ENCODE measurements at regions of chr12 and their contacts with region 1.

Region 1: DNA sequence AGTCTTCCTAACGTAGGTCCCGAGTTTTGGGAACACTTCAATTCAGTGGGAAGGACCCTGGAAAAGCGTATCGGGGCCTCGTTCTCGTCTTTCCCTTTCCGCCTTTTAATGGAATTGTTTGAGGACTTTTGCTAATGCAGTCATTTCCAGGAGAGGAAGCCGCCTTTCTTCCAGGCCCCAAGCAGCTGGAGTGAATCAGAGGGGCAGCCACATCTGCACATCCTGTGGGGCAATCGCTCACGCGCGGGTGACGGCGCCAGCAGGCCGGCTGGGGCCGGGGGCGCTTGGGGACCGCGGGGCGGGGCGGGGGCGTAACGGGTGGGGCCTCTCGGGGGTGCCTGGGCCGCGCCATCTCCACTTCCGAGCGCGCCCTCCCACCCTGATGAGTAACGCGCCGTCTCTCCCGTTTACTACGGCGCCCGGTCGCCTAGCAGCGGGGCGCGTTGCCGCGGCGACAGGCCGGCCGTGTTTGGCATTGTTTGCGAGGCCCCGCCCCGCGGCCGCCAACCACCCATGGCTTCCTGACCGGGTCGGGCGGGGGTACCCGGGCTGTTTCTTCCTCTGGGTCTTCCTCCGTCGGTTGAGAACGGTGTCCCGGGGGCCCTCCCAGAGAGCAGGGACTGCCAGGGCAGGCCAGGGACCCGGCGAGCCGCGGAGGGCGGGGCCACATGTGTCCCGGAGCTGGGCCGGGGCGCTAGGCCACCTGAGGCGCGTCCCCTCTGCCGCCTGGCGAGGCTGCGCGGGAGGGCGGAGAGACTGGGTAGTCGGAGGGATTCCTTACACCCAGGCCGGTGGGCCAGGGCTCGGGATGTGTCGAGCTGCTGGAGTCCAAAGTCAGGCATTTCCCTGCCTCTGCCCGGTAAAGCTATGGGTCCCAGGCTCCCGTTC is 2.3 kb downstream of the GSG1 start:
- DNase-seq: peak; percentile 93
- H3K4me3 Mint-ChIP-seq: peak overlapping the region; percentile 61
- H3K27ac Mint-ChIP-seq: peak overlapping the region; percentile 83
- H3K4me1 Mint-ChIP-seq: peaks cover 57% of the 10 kb centered on the region
- H3K27me3 Mint-ChIP-seq: no peaks in the 10 kb centered on the region

Region 2: GRCh38 chr12:12724661-12725545 is 376.2 kb before region 1 on chr12:
- CTCF ChIA-PET with region 1: no interaction called
- POLR2A ChIA-PET with region 1: interaction called, 3 read pairs
- intact Hi-C with region 1: loop called (anchors 2 kb)
- DNase-seq: peak; percentile 95
- H3K4me3 Mint-ChIP-seq: peak overlapping the region; percentile 95
- H3K27ac Mint-ChIP-seq: peak overlapping the region; percentile 97
- H3K4me1 Mint-ChIP-seq: peaks cover 50% of the 10 kb centered on the region
- H3K27me3 Mint-ChIP-seq: peaks cover 2% of the 10 kb centered on the region

Region 3: DNA sequence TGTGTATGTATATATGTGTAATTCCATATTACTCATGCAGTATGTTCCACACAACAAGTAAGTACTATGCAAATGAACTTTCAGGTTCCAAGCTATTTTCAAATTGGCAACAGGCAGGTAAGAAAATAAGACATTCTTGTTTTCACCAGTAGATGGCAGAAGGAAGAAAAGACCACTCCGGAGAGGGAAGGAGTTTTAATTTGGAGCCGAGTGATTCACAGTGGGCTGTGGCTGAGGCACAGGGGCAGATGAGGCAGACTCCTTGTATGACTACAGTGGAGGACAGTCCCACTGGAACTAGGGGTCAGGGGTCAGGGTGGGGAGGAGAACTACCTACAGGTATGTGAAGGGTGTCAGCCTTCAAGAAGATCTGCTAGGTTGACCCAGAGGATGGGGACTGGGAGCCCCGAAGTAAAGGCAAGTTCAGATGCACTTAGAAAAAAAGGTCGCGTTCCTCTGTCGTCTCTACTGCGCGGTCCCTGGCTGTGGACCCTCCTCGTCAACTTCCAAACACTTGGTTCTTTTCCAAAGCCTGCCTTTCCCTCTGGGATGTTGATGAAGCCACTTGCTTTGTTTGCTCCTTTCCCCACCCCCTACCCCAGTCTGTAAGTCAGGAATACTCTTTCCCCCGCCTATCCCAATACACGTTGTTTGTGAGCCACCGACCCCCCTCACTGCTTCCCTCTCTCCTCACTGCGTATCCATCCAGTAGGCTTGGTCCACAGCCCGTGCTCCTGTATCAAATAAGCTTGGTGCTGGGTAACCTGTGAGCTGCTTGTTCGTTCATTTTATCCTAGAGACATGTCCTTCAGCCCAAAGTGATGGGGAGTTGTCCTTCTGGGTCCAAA is 263.9 kb before region 1 on chr12:
- CTCF ChIA-PET with region 1: interaction called, 4 read pairs
- POLR2A ChIA-PET with region 1: no interaction called
- intact Hi-C with region 1: loop called (anchors 5 kb)
- DNase-seq: peak; percentile 79
- H3K4me3 Mint-ChIP-seq: no peak overlapping the region
- H3K27ac Mint-ChIP-seq: peak overlapping the region; percentile 42
- H3K4me1 Mint-ChIP-seq: peaks cover 48% of the 10 kb centered on the region
- H3K27me3 Mint-ChIP-seq: no peaks in the 10 kb centered on the region

Region 4: GRCh38 chr12:13044002-13044905 is 56.9 kb before region 1 on chr12 and contains the start of gene FAM234B:
- CTCF ChIA-PET with region 1: no interaction called
- POLR2A ChIA-PET with region 1: interaction called, 4 read pairs
- intact Hi-C with region 1: loop called (anchors 1 kb)
- DNase-seq: peak; percentile 78
- H3K4me3 Mint-ChIP-seq: peak within 1 kb of the TSS; percentile 80
- H3K27ac Mint-ChIP-seq: no peak within 1 kb of the TSS
- H3K4me1 Mint-ChIP-seq: peaks cover 25% of the 10 kb centered on the region
- H3K27me3 Mint-ChIP-seq: peaks cover 3% of the 10 kb centered on the region
- total RNA-seq, gene FAM234B: 6.8 TPM

Region 5: GRCh38 chr12:13196130-13196921 is 95.2 kb after region 1 on chr12 and contains the start of gene EMP1:
- CTCF ChIA-PET with region 1: interaction called, 13 read pairs
- POLR2A ChIA-PET with region 1: interaction called, 17 read pairs
- intact Hi-C with region 1: loop called (anchors 1 kb)
- DNase-seq: peak; percentile 89
- H3K4me3 Mint-ChIP-seq: peak within 1 kb of the TSS; percentile 83
- H3K27ac Mint-ChIP-seq: peak within 1 kb of the TSS; percentile 79
- H3K4me1 Mint-ChIP-seq: peaks cover 29% of the 10 kb centered on the region
- H3K27me3 Mint-ChIP-seq: peaks cover 4% of the 10 kb centered on the region
- total RNA-seq, gene EMP1: 54.4 to 57.3 TPM

Region 6: GRCh38 chr12:13452955-13453570 is 351.9 kb after region 1 on chr12:
- CTCF ChIA-PET with region 1: no interaction called
- POLR2A ChIA-PET with region 1: no interaction called
- intact Hi-C with region 1: no loop called
- DNase-seq: no peak
- H3K4me3 Mint-ChIP-seq: no peak overlapping the region
- H3K27ac Mint-ChIP-seq: no peak overlapping the region
- H3K4me1 Mint-ChIP-seq: no peaks in the 10 kb centered on the region
- H3K27me3 Mint-ChIP-seq: peaks cover 2% of the 10 kb centered on the region

Region 7: GRCh38 chr12:14365294-14366208 is 1264.4 kb after region 1 on chr12 and contains the start of gene ATF7IP:
- CTCF ChIA-PET with region 1: no interaction called
- POLR2A ChIA-PET with region 1: no interaction called
- intact Hi-C with region 1: loop called (anchors 5 kb)
- DNase-seq: peak; percentile 97
- H3K4me3 Mint-ChIP-seq: peak within 1 kb of the TSS; percentile 76
- H3K27ac Mint-ChIP-seq: peak within 1 kb of the TSS; percentile 91
- H3K4me1 Mint-ChIP-seq: peaks cover 41% of the 10 kb centered on the region
- H3K27me3 Mint-ChIP-seq: peaks cover 1% of the 10 kb centered on the region
- total RNA-seq, gene ATF7IP: 93.0 to 94.1 TPM